Ovary (tissue), 10 donors: ENCODE measurements at regions of chr13 and their contacts with region 1.

Region 1: DNA sequence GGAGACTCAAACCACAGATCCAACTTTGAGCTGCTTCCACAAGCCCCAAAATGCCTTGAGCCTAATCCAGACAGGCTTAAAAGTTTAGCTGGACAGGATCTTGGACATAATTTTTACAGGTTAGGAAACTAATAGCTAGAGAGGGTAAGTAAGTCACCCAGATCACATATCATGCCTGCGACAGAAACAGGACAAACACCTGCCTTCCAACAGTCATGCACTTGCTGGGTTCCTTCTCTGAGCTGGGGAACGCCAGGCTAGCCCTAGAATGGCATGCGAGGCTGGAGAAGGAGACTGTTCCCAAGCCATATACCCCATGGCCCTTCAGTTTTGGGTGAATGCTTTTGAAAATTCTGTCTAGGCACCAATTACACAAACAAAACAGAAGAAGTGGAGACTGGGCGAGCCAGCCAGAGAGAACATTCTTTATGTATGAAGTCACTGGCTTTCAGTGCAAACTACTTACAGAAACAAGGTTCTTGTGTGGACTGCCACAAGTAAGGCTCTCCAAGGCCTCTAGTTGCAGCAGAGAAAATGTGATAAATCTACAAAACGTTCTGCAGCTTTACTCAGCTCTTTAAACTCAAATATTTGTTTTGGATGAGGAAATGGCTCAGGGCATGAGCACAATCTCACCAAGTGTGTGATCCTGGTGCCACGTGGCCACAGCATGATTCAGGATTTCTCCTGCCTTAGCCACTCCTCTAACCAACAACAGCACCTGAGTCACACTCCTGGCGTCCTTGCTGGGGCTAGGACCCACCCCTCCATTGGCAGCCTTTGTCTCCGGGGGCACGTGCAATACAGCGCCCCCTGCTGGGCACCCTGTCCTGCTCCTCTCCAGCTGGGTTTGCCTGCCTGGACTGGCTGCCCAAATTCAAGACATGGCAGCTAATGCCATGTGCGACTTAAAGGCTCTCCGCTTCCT is 73.4 kb upstream of the UBL3 start:
- DNase-seq: peak; percentile 43 to 76 (median 65)
- H3K4me3 ChIP-seq: no peak overlapping the region
- H3K27ac ChIP-seq: peak overlapping the region in 1 of 2 donors; percentile 8
- H3K4me1 ChIP-seq: peaks cover 17% of the 10 kb centered on the region
- H3K27me3 ChIP-seq: no peaks in the 10 kb centered on the region
- CTCF ChIP-seq: peak; percentile 24 to 44 (median 36)
- EP300 ChIP-seq: no peak
- POLR2A ChIP-seq: no peak

Region 2: GRCh38 chr13:29850224-29850898 is 73.5 kb before region 1 on chr13 and contains the start of gene UBL3:
- intact Hi-C with region 1: loop called in 1 of 4 experiments (anchors 10 kb)
- DNase-seq: peak; percentile 96 to 98 (median 97)
- H3K4me3 ChIP-seq: peak within 1 kb of the TSS; percentile 89
- H3K27ac ChIP-seq: peak within 1 kb of the TSS; percentile 96 to 97
- H3K4me1 ChIP-seq: no peaks in the 10 kb centered on the region
- H3K27me3 ChIP-seq: no peaks in the 10 kb centered on the region
- CTCF ChIP-seq: peak in 1 of 3 donors; percentile 18
- EP300 ChIP-seq: no peak
- POLR2A ChIP-seq: peak; percentile 89
- total RNA-seq, gene UBL3: 30.9 to 41.4 (median 35.7) TPM

Region 3: DNA sequence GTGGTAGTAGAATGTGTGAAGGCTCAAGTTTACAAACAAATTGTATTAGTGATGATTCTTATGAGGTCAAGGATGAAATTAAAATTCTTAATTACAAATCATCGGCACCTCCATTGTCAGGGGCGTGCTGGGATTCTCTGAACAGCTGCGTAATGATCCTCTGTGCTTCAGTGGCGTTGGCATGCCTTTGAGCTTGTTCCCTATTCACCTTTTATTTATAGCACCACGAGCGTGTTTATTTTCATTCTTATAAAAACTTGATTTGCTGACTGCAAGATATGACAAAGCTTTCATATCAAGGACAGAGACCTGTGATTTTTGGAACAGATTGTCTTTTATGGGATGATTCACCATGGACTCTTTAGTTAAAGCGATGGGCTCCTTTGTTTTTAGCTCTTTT is 55.2 kb before region 1 on chr13:
- intact Hi-C with region 1: no loop called
- DNase-seq: no peak
- H3K4me3 ChIP-seq: no peak overlapping the region
- H3K27ac ChIP-seq: no peak overlapping the region
- H3K4me1 ChIP-seq: no peaks in the 10 kb centered on the region
- H3K27me3 ChIP-seq: no peaks in the 10 kb centered on the region
- CTCF ChIP-seq: no peak
- EP300 ChIP-seq: no peak
- POLR2A ChIP-seq: no peak

Region 4: GRCh38 chr13:29954082-29955028 is 30.5 kb after region 1 on chr13:
- intact Hi-C with region 1: no loop called
- DNase-seq: no peak
- H3K4me3 ChIP-seq: no peak overlapping the region
- H3K27ac ChIP-seq: no peak overlapping the region
- H3K4me1 ChIP-seq: no peaks in the 10 kb centered on the region
- H3K27me3 ChIP-seq: no peaks in the 10 kb centered on the region
- CTCF ChIP-seq: no peak
- EP300 ChIP-seq: no peak
- POLR2A ChIP-seq: no peak